ENCODE measurements at regions of chr19 and their contacts with region 1.

Region 1: GRCh38 chr19:34253699-34254551 is 429 bp upstream of the GARRE1 start:
- DNase-seq: peak in 1 of 2 donors; percentile 87
- ATAC-seq: peak; percentile 27 to 41 (median 35)
- H3K4me3 ChIP-seq: peak overlapping the region; percentile 62
- H3K4me3 Mint-ChIP-seq: peak overlapping the region; percentile 94
- H3K27ac ChIP-seq: peak overlapping the region; percentile 81
- H3K27ac Mint-ChIP-seq: peak overlapping the region; percentile 87 to 98
- H3K4me1 ChIP-seq: peaks cover 13% of the 10 kb centered on the region
- H3K4me1 Mint-ChIP-seq: peaks cover 9 to 15% of the 10 kb centered on the region in 2 donors
- H3K27me3 ChIP-seq: no peaks in the 10 kb centered on the region
- H3K27me3 Mint-ChIP-seq: no peaks in the 10 kb centered on the region
- CTCF ChIP-seq: no peak

Region 2: DNA sequence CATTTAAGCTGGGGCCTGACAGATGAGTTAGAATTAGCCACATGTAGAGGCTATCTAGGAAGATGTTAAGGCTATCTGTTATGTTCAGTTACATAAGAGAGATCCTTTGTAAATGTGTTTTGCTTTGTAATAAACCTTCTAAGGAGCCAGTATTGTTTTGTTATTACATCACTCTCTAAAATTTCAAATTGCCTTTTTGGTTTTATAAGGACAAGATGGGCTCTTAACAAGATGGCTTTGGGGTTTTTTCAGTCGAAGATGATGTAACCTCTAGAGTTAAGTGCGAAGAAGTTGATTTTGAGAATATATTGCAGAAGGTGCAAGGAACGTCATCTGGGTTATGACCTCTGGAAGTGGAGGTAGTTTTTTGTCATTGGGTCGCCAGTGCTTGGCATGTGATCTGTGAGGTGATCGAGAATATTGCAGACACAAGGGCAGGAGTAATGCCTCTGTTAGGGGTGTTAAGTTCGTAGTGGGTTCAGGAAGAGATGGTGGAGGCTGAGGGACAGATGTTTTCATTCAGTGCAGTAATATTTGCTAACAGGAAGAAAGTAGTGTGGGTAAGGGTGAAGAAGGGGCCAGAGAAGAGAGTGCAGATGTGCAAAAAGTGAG is 68.9 kb before region 1 on chr19:
- intact Hi-C with region 1: loop called (anchors 2 kb)
- DNase-seq: peak; percentile 50 to 64
- ATAC-seq: peak; percentile 89 to 96 (median 91)
- H3K4me3 ChIP-seq: no peak overlapping the region
- H3K4me3 Mint-ChIP-seq: peak overlapping the region; percentile 70
- H3K27ac ChIP-seq: peak overlapping the region; percentile 87
- H3K27ac Mint-ChIP-seq: peak overlapping the region; percentile 89 to 98
- H3K4me1 ChIP-seq: peaks cover 34% of the 10 kb centered on the region
- H3K4me1 Mint-ChIP-seq: peaks cover 74 to 76% of the 10 kb centered on the region in 2 donors
- H3K27me3 ChIP-seq: no peaks in the 10 kb centered on the region
- H3K27me3 Mint-ChIP-seq: no peaks in the 10 kb centered on the region
- CTCF ChIP-seq: no peak

Region 3: GRCh38 chr19:34232566-34233481 is 21.1 kb before region 1 on chr19:
- intact Hi-C with region 1: no loop called
- DNase-seq: no peak
- ATAC-seq: peak in 2 of 3 donors; percentile 9 to 59
- H3K4me3 ChIP-seq: no peak overlapping the region
- H3K4me3 Mint-ChIP-seq: no peak overlapping the region
- H3K27ac ChIP-seq: no peak overlapping the region
- H3K27ac Mint-ChIP-seq: peak overlapping the region; percentile 54 to 69
- H3K4me1 ChIP-seq: peaks cover 8% of the 10 kb centered on the region
- H3K4me1 Mint-ChIP-seq: peaks cover 11 to 16% of the 10 kb centered on the region in 2 donors
- H3K27me3 ChIP-seq: no peaks in the 10 kb centered on the region
- H3K27me3 Mint-ChIP-seq: no peaks in the 10 kb centered on the region
- CTCF ChIP-seq: no peak

Region 4: GRCh38 chr19:34298891-34299520 is 45.1 kb after region 1 on chr19:
- intact Hi-C with region 1: no loop called
- DNase-seq: no peak
- ATAC-seq: no peak
- H3K4me3 ChIP-seq: no peak overlapping the region
- H3K4me3 Mint-ChIP-seq: no peak overlapping the region
- H3K27ac ChIP-seq: no peak overlapping the region
- H3K27ac Mint-ChIP-seq: peak overlapping the region; percentile 8 to 16
- H3K4me1 ChIP-seq: no peaks in the 10 kb centered on the region
- H3K4me1 Mint-ChIP-seq: no peaks in the 10 kb centered on the region
- H3K27me3 ChIP-seq: no peaks in the 10 kb centered on the region
- H3K27me3 Mint-ChIP-seq: no peaks in the 10 kb centered on the region
- CTCF ChIP-seq: no peak

Region 5: DNA sequence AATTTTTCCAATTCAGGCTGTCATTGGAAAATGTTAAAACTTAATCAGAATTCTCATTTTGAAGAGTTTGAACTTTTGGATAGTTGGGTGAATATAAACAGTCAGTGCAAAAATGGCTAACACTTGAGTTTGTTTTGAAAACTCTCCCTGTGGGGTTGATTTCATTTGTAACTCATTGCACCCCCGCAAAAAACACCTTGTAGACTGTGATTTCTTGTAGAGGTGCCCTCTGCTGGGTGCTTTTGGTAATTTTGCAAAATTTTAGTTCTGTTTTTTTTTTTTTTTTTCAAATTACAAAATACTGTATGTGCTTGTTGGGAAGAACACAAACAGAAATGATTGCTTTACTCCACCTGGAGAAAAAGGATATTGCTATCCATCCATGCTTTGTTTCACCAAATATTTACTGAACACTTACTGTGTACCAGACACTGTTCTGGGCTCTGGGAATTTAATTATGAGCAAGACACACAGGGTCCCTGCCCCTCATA is 82.9 kb after region 1 on chr19:
- intact Hi-C with region 1: loop called (anchors 5 kb)
- DNase-seq: peak in 1 of 2 donors; percentile 79
- ATAC-seq: peak; percentile 67 to 83 (median 73)
- H3K4me3 ChIP-seq: no peak overlapping the region
- H3K4me3 Mint-ChIP-seq: no peak overlapping the region
- H3K27ac ChIP-seq: no peak overlapping the region
- H3K27ac Mint-ChIP-seq: peak overlapping the region; percentile 33 to 65
- H3K4me1 ChIP-seq: no peaks in the 10 kb centered on the region
- H3K4me1 Mint-ChIP-seq: peaks cover 4 to 6% of the 10 kb centered on the region in 2 donors
- H3K27me3 ChIP-seq: no peaks in the 10 kb centered on the region
- H3K27me3 Mint-ChIP-seq: no peaks in the 10 kb centered on the region
- CTCF ChIP-seq: peak; percentile 83